CD4-positive, alpha-beta T cell (primary cell): ENCODE measurements at regions of chr13 and their contacts with region 1.

Region 1: GRCh38 chr13:110705826-110706569 is at the start of gene CARS2:
- DNase-seq: peak; percentile 83 to 98 (median 91)
- ATAC-seq: peak; percentile 91
- H3K4me3 ChIP-seq: peak within 1 kb of the TSS; percentile 71
- H3K4me3 Mint-ChIP-seq: peak within 1 kb of the TSS; percentile 94
- H3K27ac ChIP-seq: peak within 1 kb of the TSS in 1 of 2 donors; percentile 35
- H3K27ac Mint-ChIP-seq: peak within 1 kb of the TSS; percentile 92
- H3K4me1 ChIP-seq: peaks cover 41% of the 10 kb centered on the region
- H3K4me1 Mint-ChIP-seq: peaks cover 43% of the 10 kb centered on the region
- H3K27me3 ChIP-seq: no peaks in the 10 kb centered on the region
- H3K27me3 Mint-ChIP-seq: no peaks in the 10 kb centered on the region
- CTCF ChIP-seq: no peak
- total RNA-seq, gene CARS2: 50.2 to 56.5 TPM

Region 2: GRCh38 chr13:110615322-110616102 is 90.5 kb before region 1 on chr13 and contains the start of gene NAXD:
- CTCF ChIA-PET with region 1: no interaction called
- POLR2A ChIA-PET with region 1: interaction called, 17 read pairs
- intact Hi-C with region 1: loop called (anchors 5 to 10 kb)
- DNase-seq: peak; percentile 57 to 85 (median 67)
- ATAC-seq: peak; percentile 79
- H3K4me3 ChIP-seq: peak within 1 kb of the TSS; percentile 85
- H3K4me3 Mint-ChIP-seq: peak within 1 kb of the TSS; percentile 89
- H3K27ac ChIP-seq: peak within 1 kb of the TSS; percentile 22 to 56
- H3K27ac Mint-ChIP-seq: peak within 1 kb of the TSS; percentile 83
- H3K4me1 ChIP-seq: peaks cover 22% of the 10 kb centered on the region
- H3K4me1 Mint-ChIP-seq: peaks cover 42% of the 10 kb centered on the region
- H3K27me3 ChIP-seq: no peaks in the 10 kb centered on the region
- H3K27me3 Mint-ChIP-seq: peaks cover under 1% of the 10 kb centered on the region
- CTCF ChIP-seq: no peak
- total RNA-seq, gene NAXD: 17.4 to 17.8 TPM

Region 3: DNA sequence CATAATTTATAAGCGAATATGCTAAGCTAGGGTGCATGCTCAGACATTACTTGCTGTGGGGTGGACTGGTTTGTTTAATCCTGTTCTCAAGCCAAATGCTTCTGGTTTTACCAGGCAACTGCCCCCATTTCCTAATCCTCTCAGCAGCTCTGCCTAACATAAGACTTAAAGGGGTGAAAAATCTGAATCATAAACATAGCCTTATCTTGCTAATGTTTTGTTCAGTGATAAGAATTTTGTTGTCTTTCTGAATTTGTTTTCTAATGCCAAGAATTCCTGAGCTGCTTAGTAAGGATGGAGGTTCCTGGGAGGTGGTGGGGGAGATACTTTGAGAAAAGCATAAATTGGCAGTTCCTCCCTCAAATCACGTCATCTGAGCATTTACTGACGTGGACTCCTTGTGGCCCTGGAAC is 50.2 kb after region 1 on chr13:
- CTCF ChIA-PET with region 1: no interaction called
- POLR2A ChIA-PET with region 1: no interaction called
- intact Hi-C with region 1: no loop called
- DNase-seq: no peak
- ATAC-seq: no peak
- H3K4me3 ChIP-seq: no peak overlapping the region
- H3K4me3 Mint-ChIP-seq: no peak overlapping the region
- H3K27ac ChIP-seq: no peak overlapping the region
- H3K27ac Mint-ChIP-seq: no peak overlapping the region
- H3K4me1 ChIP-seq: no peaks in the 10 kb centered on the region
- H3K4me1 Mint-ChIP-seq: no peaks in the 10 kb centered on the region
- H3K27me3 ChIP-seq: peaks cover 0 to 4% of the 10 kb centered on the region in 2 experiments
- H3K27me3 Mint-ChIP-seq: peaks cover 13% of the 10 kb centered on the region
- CTCF ChIP-seq: no peak

Region 4: DNA sequence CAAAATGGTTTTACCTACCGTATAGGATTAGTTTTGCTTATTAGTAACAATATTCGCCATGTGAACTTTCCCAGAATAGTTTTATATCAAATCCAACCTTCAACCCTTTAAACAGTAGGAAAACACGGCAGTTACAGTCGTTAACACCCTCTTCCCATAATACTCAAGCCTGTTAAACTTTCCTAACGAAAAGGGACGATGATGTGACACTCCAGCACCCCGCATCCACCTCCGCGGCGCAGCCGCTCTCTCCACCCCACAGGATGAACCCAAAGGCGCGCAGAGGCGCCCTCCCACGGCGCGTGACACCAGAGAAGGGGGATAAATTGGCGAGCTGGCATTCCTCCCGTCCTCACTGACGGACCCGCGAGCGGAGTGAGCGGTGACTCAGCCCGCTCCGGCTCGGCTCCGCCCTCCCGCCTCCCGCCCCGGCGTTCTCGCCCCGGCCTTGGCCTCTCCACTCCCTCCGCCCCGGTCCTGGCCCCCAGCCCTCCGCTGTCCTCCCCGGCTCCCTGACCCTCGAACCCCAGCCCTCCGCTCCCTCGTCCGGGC is 1881.3 kb after region 1 on chr13:
- CTCF ChIA-PET with region 1: no interaction called
- POLR2A ChIA-PET with region 1: no interaction called
- intact Hi-C with region 1: loop called in 1 of 2 experiments (anchors 5 kb)
- DNase-seq: peak; percentile 13 to 84 (median 54)
- ATAC-seq: peak; percentile 64
- H3K4me3 ChIP-seq: peak overlapping the region; percentile 85
- H3K4me3 Mint-ChIP-seq: peak overlapping the region; percentile 96
- H3K27ac ChIP-seq: peak overlapping the region; percentile 46 to 75
- H3K27ac Mint-ChIP-seq: peak overlapping the region; percentile 73
- H3K4me1 ChIP-seq: peaks cover 31% of the 10 kb centered on the region
- H3K4me1 Mint-ChIP-seq: peaks cover 46% of the 10 kb centered on the region
- H3K27me3 ChIP-seq: no peaks in the 10 kb centered on the region
- H3K27me3 Mint-ChIP-seq: no peaks in the 10 kb centered on the region
- CTCF ChIP-seq: no peak